ENCODE measurements at regions of chr2 and their contacts with region 1.

Region 1: GRCh38 chr2:70561893-70562292 is 8.3 kb upstream of the TGFA start:
- DNase-seq: peak; percentile 55
- ATAC-seq: peak; percentile 45; the same call in 1 of the 2 replicates
- H3K4me3 ChIP-seq: no peak overlapping the region
- H3K27ac ChIP-seq: no peak overlapping the region
- H3K4me1 ChIP-seq: peaks cover 31% of the 10 kb centered on the region
- H3K27me3 ChIP-seq: no peaks in the 10 kb centered on the region
- CTCF ChIP-seq: no peak

Region 2: DNA sequence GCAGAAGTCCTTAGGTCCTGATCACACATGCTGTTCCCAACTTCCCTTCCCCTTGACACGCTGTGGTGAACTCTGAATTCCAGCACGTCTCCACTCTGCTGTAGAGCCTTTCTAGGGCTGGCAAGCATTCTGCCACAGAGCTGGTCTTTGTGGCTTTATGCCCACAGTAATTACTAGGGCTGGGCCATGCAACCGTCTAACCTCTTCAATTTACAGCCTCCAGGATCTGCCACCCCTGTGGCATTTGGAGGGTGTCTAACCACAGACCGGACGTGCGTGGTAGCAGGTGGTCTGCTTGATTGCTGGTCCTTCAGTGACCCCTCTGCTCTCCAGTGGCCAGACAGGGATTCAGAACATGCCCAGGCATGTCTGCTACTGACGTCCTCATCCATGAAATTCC is 34.8 kb after region 1 on chr2:
- CTCF ChIA-PET with region 1: no interaction called
- POLR2A ChIA-PET with region 1: no interaction called
- intact Hi-C with region 1: loop called (anchors 5 kb)
- DNase-seq: peak; percentile 75
- ATAC-seq: peak; percentile 80
- H3K4me3 ChIP-seq: no peak overlapping the region; the same call in 1 of the 2 replicates
- H3K27ac ChIP-seq: peak overlapping the region; percentile 93
- H3K4me1 ChIP-seq: peaks cover 32% of the 10 kb centered on the region
- H3K27me3 ChIP-seq: no peaks in the 10 kb centered on the region
- CTCF ChIP-seq: no peak

Region 3: GRCh38 chr2:70835643-70836042 is 273.8 kb after region 1 on chr2 and contains the start of gene CD207:
- CTCF ChIA-PET with region 1: no interaction called
- POLR2A ChIA-PET with region 1: no interaction called
- intact Hi-C with region 1: no loop called
- DNase-seq: no peak
- ATAC-seq: no peak
- H3K4me3 ChIP-seq: no peak within 1 kb of the TSS
- H3K27ac ChIP-seq: no peak within 1 kb of the TSS
- H3K4me1 ChIP-seq: no peaks in the 10 kb centered on the region
- H3K27me3 ChIP-seq: peaks cover 92% of the 10 kb centered on the region
- CTCF ChIP-seq: no peak
- total RNA-seq, gene CD207: not detected in 2 replicates

Measured in PC-3 (cell line).